Adrenal gland (tissue), 19 donors: ENCODE measurements at regions of chr22 and their contacts with region 1.

Region 1: DNA sequence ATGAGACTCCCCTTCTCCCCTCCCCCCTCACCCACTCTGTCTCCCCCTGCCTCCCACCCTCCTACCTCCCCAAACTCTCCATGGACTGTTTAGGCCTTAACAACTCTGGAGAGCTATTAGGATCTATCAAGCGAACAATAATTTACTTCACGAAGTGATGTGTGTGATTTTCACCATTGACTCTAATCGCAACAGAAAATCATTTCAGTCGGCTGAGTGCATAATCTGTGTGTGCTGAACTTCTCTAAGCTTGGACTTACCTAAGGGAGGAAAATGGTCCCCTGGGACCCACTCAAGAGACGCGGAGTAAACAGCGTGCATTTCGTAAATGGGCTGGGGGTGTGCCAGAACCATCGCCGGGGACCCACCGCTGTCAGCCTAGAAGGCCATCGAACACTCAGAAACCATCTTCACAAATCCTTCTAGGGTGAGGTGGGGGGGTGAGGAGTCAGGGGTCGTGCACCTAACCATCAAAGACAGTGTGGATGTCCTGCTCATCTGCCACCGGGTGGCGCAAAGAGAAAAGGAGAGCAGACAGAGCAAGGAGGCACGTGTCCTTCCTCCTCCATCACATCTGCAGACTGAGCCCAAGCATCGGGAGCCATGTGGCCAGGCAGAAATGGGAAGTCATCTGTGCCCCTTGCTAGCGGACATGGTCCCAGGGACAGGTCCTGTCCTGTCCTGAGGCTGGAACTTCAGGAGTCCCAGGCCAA is 62.1 kb upstream of the NUP50 start:
- DNase-seq: peak; percentile 63 to 83 (median 77)
- H3K4me3 ChIP-seq: no peak overlapping the region
- H3K27ac ChIP-seq: no peak overlapping the region
- H3K4me1 ChIP-seq: no peaks in the 10 kb centered on the region
- H3K27me3 ChIP-seq: no peaks in the 10 kb centered on the region
- CTCF ChIP-seq: peak in 5 of 6 experiments; percentile 38 to 84 (median 76)
- POLR2A ChIP-seq: no peak

Region 2: GRCh38 chr22:45226527-45227186 is 125.0 kb after region 1 on chr22:
- intact Hi-C with region 1: no loop called
- DNase-seq: peak in 5 of 7 donors; percentile 49 to 76 (median 67)
- H3K4me3 ChIP-seq: no peak overlapping the region
- H3K27ac ChIP-seq: peak overlapping the region in 2 of 5 donors; percentile 63 to 87
- H3K4me1 ChIP-seq: peaks cover 5 to 24% of the 10 kb centered on the region in 2 donors
- H3K27me3 ChIP-seq: no peaks in the 10 kb centered on the region
- CTCF ChIP-seq: no peak
- POLR2A ChIP-seq: peak in 1 of 2 donors; percentile 21

Region 3: DNA sequence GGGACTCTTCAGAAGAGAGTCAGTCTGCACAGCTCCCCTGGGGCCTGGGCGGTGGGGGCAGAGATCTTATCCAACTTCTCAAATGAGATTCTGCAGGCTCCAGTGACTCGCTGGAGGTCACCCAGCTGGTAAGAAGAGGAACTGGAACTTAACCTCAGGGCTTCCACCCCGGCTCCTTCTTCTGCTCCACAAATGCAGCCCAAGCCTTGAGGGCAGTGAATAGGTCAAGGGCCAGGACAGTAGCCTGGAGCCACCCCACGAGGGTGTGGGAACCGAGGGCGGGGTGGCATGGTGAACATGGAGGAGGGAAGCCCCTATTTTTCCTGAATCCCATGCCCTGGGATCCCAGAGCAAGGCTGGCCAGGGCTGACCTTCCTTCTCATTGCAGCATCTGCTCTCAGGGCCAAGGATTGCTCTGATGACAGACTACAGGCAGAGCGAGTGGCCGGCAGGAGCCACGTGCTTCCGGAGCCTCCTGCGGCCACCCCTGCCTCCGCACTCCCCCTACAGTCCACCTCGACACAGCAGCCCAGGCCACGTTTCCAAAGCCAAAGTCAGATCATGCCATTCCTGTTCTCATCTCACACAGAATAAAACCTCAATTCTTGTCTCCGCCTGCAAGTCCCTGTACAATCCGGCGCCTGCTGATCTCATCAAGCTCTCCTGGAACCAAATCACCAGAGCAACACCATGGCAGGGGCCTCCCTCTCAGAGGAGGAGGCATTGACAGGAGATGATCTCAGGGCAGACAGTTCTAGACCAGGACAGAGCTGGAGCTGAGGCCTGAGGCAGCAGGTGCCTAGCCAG is 162.0 kb after region 1 on chr22:
- intact Hi-C with region 1: loop called (anchors 5 kb)
- DNase-seq: peak; percentile 78 to 93 (median 89)
- H3K4me3 ChIP-seq: no peak overlapping the region
- H3K27ac ChIP-seq: peak overlapping the region in 4 of 5 donors; percentile 20 to 77 (median 52)
- H3K4me1 ChIP-seq: peaks cover under 1 to 21% of the 10 kb centered on the region in 2 donors
- H3K27me3 ChIP-seq: no peaks in the 10 kb centered on the region
- CTCF ChIP-seq: peak; percentile 70 to 93 (median 88)
- POLR2A ChIP-seq: no peak

Region 4: DNA sequence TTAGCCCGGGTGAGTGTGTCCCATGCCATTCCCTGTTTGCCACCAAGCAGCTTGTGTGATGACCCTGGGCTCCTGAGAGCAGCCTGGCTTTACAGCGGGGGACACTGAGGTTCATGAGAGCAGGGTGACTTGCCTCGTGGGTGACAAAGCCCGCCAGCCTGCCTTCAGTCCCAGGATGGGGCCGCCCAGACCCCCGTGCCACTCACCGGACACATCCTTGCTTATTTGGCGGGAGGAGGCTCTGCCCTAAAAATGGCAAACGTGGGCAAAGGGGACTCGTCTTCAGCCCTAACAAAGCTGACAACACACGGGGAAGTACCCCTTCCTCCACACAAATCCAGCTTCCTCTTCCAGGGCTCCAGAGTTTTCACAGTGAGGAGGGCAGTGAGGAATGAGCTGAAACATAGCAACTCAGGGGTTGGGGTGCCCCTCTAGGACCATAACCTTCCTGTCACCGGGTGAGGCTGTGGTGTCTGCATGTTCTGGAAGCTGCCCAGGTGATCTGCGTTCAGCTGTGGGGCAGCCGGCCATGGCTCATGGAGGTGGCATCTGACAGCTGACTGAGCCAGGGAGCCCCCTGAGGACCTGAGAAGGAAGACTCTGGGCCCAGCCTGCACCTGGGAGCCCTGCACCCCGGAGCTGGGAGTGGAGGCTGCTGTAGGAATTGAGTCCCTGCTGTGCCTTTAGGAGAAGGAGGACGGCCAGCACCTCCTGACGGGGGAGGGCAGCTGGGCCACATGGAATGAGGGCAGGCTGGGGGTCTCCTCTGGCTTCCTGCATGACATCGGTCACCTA is 328.5 kb after region 1 on chr22:
- intact Hi-C with region 1: loop called (anchors 5 to 10 kb)
- DNase-seq: no peak
- H3K4me3 ChIP-seq: no peak overlapping the region
- H3K27ac ChIP-seq: no peak overlapping the region
- H3K4me1 ChIP-seq: peaks cover 0 to 2% of the 10 kb centered on the region in 2 donors
- H3K27me3 ChIP-seq: no peaks in the 10 kb centered on the region
- CTCF ChIP-seq: no peak
- POLR2A ChIP-seq: no peak

Region 5: DNA sequence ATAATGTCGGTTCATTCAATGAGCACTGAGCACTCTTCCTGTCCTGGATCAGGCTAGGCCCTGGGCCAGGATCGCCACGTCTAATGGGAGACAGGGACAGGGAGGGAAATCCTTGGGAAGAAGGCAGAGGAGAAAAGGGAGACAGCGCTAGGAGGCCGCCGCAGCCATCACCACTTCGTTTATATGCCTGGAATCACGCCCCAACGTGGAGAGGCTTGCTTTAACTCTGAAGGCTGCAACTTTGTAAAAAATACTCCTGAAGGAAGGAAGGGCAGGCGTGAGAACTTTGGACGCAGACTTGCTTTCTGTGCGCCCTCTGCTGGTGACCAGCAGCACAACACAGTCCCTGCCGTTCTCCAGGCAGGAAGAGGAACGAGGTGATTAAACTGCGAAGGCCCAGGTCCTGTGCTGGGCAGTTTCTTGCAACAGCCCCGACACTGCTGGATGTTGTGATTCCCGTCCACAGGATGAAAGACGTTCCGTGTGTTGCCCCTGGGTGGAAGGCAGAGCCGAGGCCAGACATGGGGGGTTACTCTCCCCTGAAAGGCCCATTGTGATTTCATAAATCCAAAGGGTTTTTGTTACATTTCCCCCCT is 334.0 kb after region 1 on chr22:
- intact Hi-C with region 1: loop called (anchors 5 to 10 kb)
- DNase-seq: peak; percentile 84 to 96 (median 91)
- H3K4me3 ChIP-seq: no peak overlapping the region
- H3K27ac ChIP-seq: peak overlapping the region in 2 of 5 donors; percentile 51 to 69
- H3K4me1 ChIP-seq: peaks cover 0 to 5% of the 10 kb centered on the region in 2 donors
- H3K27me3 ChIP-seq: peaks cover 4% of the 10 kb centered on the region
- CTCF ChIP-seq: peak; percentile 95 to 98 (median 98)
- POLR2A ChIP-seq: no peak